ENCODE measurements at regions of chr17 and their contacts with region 1.

Region 1: DNA sequence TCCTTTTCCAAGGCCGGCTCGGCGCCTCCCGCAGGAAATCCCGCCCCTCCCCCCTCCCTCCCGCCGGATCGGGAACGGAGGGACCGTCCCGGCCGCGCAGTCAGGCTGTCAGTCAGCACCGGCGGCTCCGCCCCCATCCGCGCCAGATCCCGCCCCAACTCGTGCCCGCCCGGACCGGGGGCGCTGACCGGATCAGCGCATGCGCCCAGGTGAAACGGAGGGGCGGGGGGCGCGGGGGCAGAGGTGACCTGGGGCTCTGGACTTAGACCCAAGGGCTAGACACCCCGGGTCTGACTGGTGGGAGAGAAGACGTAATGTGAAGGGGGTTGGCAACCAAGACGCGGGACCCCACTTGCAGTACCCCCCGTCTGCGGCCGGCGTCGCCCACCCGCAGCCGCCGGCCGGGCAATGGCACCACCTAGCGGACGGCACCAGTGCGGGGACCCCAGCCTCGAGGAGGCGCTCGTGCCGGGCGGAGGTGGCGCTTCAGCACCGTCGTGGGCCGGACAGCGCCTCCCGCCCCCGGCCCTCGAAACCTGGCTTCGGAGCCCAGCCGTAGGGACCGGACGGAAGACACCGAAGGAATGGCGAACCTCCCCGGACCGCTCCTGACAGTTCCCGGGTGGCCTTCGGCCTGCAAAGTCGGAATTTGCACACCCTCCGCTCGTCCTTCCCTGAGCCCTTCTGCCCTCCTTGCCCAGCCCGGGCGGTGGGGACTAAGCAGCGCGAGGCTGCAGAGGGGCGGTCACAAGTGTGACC is at the start of gene CASKIN2:
- DNase-seq: peak; percentile 99
- H3K27ac ChIP-seq: peak within 1 kb of the TSS; percentile 86
- CTCF ChIP-seq: peak; percentile 99

Region 2: GRCh38 chr17:75173526-75173925 is 342.1 kb before region 1 on chr17:
- CTCF ChIA-PET with region 1: interaction called, 10 read pairs
- POLR2A ChIA-PET with region 1: no interaction called
- DNase-seq: no peak
- H3K27ac ChIP-seq: peak overlapping the region; percentile 47
- CTCF ChIP-seq: no peak

Region 3: DNA sequence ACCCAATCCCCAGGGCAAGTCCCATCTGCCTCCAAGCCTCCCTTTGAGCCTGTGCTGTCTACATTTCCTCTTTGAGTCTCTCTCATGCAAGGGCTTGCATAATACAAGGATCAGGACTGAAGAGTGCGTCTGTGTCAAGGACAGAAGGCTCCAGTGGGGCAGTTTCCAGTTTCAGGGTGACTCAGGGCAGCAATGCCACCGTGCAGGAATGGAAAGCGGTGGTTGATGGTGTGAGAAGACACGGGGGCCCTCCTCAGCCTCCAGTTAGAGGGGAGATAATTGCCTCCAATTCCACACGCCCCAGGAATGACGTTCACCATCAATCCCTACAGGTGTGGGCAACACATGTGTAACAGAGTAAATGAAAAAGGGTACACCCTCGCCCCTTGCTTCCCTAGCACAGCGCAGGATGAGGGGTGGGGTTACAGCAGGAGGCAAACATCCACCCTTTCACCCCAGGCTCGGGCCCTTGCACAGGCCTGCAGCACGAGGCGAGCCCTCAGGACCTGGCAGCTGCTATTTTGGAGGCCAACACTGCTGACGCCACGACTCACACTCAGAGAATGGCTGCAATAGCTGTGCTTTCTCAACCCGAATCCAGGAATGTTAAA is 201.6 kb before region 1 on chr17:
- CTCF ChIA-PET with region 1: no interaction called
- POLR2A ChIA-PET with region 1: no interaction called
- DNase-seq: no peak
- H3K27ac ChIP-seq: peak overlapping the region; percentile 52
- CTCF ChIP-seq: no peak

Region 4: DNA sequence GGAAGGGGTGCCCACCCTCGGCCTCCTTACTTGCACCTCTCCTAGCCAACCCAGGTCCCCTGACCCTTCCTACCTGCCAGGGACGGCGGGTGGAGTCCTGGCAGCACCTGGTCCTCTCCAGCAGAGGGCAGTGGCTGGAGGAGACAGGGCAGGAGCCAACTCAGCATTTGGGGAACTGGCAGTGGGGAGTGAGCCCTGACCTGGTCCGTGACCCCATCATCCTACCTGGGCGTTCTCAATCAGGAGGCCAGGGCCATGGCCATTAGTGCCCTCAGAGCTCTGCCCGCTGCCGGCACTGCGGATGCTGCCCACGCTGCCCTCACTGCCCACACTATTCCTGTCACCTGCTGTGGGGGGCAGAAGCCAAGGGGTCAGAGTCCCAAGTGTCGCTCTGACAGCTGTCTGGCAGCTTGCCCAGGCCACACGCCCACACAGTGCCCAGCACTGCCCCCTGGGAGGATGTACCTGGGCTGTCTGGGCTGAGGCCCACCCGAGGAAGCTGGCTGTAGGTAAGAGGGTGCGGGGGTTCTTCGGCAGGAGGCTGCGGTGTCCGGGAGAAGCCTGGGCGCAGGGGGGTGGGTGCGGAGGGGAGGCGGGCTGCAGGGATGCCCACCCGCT is 11.2 kb before region 1 on chr17:
- CTCF ChIA-PET with region 1: interaction called, 13 read pairs
- POLR2A ChIA-PET with region 1: no interaction called
- DNase-seq: peak; percentile 52
- H3K27ac ChIP-seq: 0 out of 2 replicates have a peak overlapping the region, but pooled peaks have one; percentile 9
- CTCF ChIP-seq: peak; percentile 73